H1 (cell line): ENCODE measurements at regions of chr22 and their contacts with region 1.

Region 1: GRCh38 chr22:24758164-24758799 is 16.2 kb downstream of the PIWIL3 start:
- DNase-seq: peak in 1 of 2 experiments; percentile 70
- H3K4me3 ChIP-seq: no peak overlapping the region
- H3K27ac ChIP-seq: no peak overlapping the region
- H3K4me1 ChIP-seq: peaks cover 0 to 8% (median 2%) of the 10 kb centered on the region in 4 experiments; a peak in 6 of 7 replicates
- H3K27me3 ChIP-seq: no peaks in the 10 kb centered on the region
- CTCF ChIP-seq: peak in 2 of 3 experiments; percentile 61 to 80; a peak in 3 of 4 replicates
- EP300 ChIP-seq: no peak
- POLR2A ChIP-seq: no peak
- RAD21 ChIP-seq: peak; percentile 90 to 95

Region 2: DNA sequence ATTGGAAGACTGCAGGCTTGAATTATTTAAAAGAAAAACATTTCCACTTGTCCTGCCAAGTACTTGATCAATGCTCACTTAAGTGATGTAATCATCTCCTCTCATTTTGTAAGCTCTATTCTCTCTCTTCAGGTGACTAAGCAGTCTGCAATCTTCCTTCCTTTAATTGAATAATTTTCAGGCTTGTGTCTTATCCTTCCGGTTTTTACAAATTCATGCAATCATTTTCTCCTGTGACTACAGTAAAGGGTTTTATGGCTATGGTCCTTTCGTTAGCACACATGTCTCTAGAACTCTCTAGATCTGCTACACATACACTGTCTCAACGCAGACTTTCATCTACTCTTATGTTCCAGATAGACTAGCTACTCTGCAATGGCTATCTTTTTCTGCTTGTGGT is 275.7 kb before region 1 on chr22:
- CTCF ChIA-PET with region 1: no interaction called
- POLR2A ChIA-PET with region 1: no interaction called
- DNase-seq: no peak
- H3K4me3 ChIP-seq: no peak overlapping the region
- H3K27ac ChIP-seq: no peak overlapping the region
- H3K4me1 ChIP-seq: no peaks in the 10 kb centered on the region; a peak in 2 of 7 replicates
- H3K27me3 ChIP-seq: no peaks in the 10 kb centered on the region
- CTCF ChIP-seq: no peak
- EP300 ChIP-seq: no peak
- POLR2A ChIP-seq: no peak
- RAD21 ChIP-seq: no peak

Region 3: GRCh38 chr22:24688256-24688655 is 70.0 kb before region 1 on chr22:
- CTCF ChIA-PET with region 1: interaction called, 10 read pairs
- POLR2A ChIA-PET with region 1: no interaction called
- DNase-seq: no peak
- H3K4me3 ChIP-seq: peak overlapping the region in 1 of 4 experiments; percentile 13; a peak in 1 of 8 replicates
- H3K27ac ChIP-seq: 0 out of 2 replicates have a peak overlapping the region, but pooled peaks have one; percentile 16
- H3K4me1 ChIP-seq: peaks cover 0 to 30% (median 19%) of the 10 kb centered on the region in 4 experiments; a peak in 5 of 7 replicates
- H3K27me3 ChIP-seq: no peaks in the 10 kb centered on the region
- CTCF ChIP-seq: no peak
- EP300 ChIP-seq: no peak
- POLR2A ChIP-seq: no peak
- RAD21 ChIP-seq: no peak

Region 4: DNA sequence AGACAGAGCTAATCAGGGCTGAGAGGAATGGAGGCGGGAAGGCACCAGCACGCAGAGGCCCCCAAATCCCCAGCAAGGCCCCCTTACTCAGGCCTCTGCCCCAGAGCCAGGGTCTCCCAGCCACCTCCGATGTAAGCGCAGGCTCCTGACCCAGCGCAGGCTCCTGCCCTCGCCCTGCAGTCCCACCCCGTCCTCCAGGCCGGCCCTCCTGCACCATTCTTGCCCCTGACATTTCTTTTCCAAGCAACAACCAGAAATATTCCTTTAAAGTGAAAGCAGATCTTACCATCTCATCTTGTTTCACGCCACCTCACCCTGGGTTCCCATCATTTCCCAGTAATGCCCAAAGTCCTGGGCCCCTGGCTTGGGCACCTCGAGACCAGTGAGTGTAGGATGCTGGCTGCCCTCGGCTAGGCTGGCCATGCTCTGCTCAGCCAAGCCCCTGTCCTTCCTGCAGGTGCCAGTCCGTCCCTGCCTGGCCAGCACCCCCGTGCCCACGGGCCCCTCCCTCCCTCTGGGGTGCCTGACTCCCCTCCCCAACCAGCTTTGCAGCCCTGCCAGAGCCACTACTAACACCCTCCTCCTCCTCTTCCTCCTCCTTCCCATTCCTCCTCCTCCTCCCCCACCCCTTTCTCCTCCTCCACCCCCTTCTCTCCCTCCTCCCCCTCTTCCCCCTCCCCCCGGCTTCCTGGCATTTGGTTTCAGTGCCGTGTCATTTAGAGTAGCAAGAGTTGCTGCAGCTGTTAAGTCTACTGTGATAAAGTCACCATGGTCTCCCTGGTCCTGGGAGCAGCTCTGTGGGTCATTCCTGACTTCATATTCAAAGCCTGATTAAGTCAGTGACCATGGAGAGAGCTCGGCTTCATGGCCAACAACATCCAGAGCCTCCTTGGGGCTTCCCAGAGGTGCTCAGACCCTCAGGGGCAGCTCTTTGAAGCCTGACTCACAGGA is 62.4 kb before region 1 on chr22:
- CTCF ChIA-PET with region 1: interaction called, 13 read pairs
- POLR2A ChIA-PET with region 1: no interaction called
- DNase-seq: peak in 1 of 2 experiments; percentile 70
- H3K4me3 ChIP-seq: peak overlapping the region in 1 of 4 experiments; percentile 39; a peak in 2 of 8 replicates
- H3K27ac ChIP-seq: peak overlapping the region; percentile 50; the same call in 1 of the 2 replicates
- H3K4me1 ChIP-seq: peaks cover 2 to 36% (median 27%) of the 10 kb centered on the region in 4 experiments
- H3K27me3 ChIP-seq: no peaks in the 10 kb centered on the region
- CTCF ChIP-seq: no peak
- EP300 ChIP-seq: no peak
- POLR2A ChIP-seq: no peak
- RAD21 ChIP-seq: no peak

Region 5: DNA sequence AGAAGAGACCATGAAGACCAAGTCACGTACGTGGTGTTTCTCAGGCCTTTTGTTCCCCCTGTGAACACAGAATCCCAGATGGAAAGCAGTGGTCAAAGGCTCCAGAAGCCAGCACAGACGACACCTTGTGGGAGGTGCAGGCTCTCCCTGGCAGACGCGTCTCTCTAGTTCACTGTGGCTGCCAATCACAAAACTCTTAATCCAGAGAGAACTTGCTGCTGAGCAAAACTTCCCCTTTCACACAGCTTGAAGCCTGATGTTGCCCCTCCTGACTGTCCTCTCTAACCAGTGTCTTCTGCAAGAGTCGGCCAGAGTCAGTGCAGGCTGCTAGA is 50.8 kb before region 1 on chr22:
- CTCF ChIA-PET with region 1: interaction called, 31 read pairs
- POLR2A ChIA-PET with region 1: no interaction called
- DNase-seq: peak in 1 of 2 experiments; percentile 53
- H3K4me3 ChIP-seq: no peak overlapping the region
- H3K27ac ChIP-seq: no peak overlapping the region
- H3K4me1 ChIP-seq: peaks cover 0 to 10% (median 4%) of the 10 kb centered on the region in 4 experiments; a peak in 4 of 7 replicates
- H3K27me3 ChIP-seq: no peaks in the 10 kb centered on the region
- CTCF ChIP-seq: peak in 2 of 3 experiments; percentile 15 to 37; a peak in 2 of 4 replicates
- EP300 ChIP-seq: no peak
- POLR2A ChIP-seq: no peak
- RAD21 ChIP-seq: peak in 1 of 2 experiments; percentile 34; a peak in 1 of 4 replicates

Region 6: GRCh38 chr22:24768537-24769374 is 10.5 kb after region 1 on chr22:
- CTCF ChIA-PET with region 1: interaction called, 31 read pairs
- POLR2A ChIA-PET with region 1: no interaction called
- DNase-seq: peak in 1 of 2 experiments; percentile 76
- H3K4me3 ChIP-seq: no peak overlapping the region
- H3K27ac ChIP-seq: no peak overlapping the region
- H3K4me1 ChIP-seq: peaks cover 0 to 3% (median 1%) of the 10 kb centered on the region in 4 experiments; a peak in 2 of 7 replicates
- H3K27me3 ChIP-seq: no peaks in the 10 kb centered on the region
- CTCF ChIP-seq: peak; percentile 47 to 82 (median 65)
- EP300 ChIP-seq: no peak
- POLR2A ChIP-seq: no peak
- RAD21 ChIP-seq: peak; percentile 82 to 85